Head of caudate nucleus (tissue), 42 donors: ENCODE measurements at regions of chr18 and their contacts with region 1.

Region 1: DNA sequence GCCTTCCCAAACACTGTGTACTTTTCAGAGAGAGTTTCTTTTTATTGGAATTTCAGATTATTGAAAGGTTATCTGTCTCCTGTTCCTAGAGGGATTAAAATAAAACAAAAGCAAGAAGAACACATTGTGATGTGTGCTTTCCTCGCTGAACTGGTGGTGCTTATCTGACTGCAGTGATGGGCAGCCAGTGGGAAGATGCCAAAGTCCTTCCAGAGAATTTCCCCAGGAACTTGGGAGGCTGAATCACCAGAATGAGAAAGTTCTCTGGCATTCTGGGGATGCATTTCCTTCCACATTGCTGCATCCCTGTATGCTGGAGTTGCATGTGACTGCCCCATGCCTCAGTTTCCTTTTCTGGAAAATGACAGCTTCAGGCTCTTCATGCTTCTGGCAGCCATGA is 53.9 kb upstream of the SEC11C start:
- DNase-seq: no peak

Region 2: GRCh38 chr18:59123588-59124369 is 38.0 kb after region 1 on chr18:
- intact Hi-C with region 1: loop called (anchors 5 kb)
- DNase-seq: peak in 36 of 42 donors; percentile 12 to 85 (median 45)

Region 3: DNA sequence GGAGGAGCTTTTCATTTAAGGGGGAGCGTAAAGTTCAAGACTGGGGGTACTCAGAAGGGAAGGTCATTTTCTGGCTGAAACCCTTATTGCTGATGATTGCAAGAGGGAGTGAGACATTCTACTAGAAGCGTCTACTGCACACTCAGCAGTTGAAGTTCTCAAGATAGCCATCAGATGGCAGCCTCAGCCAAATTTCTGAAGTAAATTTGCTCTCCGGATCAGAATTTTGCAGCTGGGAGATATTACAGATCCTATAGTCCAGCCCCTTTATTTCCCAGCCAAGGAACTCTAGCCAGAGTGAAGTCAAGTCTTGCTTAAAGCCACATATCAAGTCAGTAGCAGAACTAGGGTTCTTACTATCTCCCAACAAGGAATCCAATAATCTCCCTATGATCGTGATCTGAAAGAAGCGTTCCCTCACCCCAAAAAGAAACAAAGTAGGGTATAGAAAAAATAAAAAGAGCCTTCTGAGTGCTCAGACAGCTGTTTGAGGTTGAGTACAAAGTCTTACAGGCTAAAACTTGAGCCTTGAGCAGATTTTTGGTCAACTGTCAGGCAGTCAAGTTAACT is 163.5 kb after region 1 on chr18:
- intact Hi-C with region 1: no loop called
- DNase-seq: peak in 35 of 42 donors; percentile 9 to 84 (median 63)